ENCODE measurements at regions of chr1 and their contacts with region 1.

Region 1: DNA sequence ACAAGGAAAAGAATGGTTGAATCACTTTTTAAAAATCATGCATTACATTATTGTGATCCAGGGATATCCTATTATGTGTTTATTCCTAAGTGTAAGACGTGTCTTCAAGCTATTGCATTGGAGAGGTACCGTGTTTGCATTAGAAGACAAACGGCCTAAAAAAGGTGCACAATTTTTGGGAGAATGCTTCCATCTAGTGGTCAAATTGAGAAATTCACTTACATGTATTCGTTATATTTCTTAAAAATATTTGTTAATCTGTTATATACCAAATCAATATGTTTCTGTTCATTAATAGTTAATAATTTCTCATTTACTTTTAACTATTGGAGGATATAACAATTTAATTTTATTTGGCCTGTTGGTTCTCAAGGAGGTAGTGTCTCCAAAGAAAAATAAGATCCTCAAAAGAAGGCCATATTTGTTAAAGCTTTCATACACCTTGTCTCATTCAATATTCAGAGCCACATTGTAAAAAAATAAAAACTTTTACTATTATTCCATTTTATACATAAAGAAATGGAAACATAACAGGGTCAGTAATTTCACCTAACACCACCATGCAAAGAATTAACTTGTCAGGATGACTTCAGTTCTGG is 40.5 kb upstream of the KCTD3 start:
- DNase-seq: no peak
- H3K4me3 Mint-ChIP-seq: no peak overlapping the region
- H3K27ac Mint-ChIP-seq: no peak overlapping the region
- H3K4me1 Mint-ChIP-seq: peaks cover 3% of the 10 kb centered on the region
- H3K27me3 Mint-ChIP-seq: peaks cover 13% of the 10 kb centered on the region

Region 2: GRCh38 chr1:214632091-214632490 is 894.6 kb before region 1 on chr1:
- CTCF ChIA-PET with region 1: interaction called, 4 read pairs
- POLR2A ChIA-PET with region 1: no interaction called
- intact Hi-C with region 1: loop called (anchors 1 kb)
- DNase-seq: peak; percentile 23
- H3K4me3 Mint-ChIP-seq: no peak overlapping the region
- H3K27ac Mint-ChIP-seq: no peak overlapping the region
- H3K4me1 Mint-ChIP-seq: peaks cover 20% of the 10 kb centered on the region
- H3K27me3 Mint-ChIP-seq: no peaks in the 10 kb centered on the region

Region 3: DNA sequence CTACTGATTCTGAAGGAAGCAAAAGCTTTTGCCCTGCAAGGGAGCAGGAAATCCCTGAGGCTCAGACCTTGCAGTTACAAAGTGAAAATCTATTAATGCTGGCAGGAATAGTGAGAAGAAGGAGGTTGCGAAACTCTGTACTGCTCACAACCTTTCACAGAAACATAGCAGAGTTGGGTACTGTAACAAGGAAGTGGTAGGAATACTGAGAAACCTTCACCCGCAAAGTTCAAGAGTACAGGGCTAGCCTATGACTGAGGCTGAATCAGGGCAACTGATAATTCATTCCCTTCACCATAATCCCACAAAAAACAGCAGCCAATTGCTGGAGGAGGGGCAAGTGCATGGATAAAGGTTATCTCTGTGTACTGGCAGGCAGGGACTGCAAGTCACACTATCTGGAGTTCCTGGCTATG is 16.5 kb after region 1 on chr1:
- CTCF ChIA-PET with region 1: interaction called, 29 read pairs
- POLR2A ChIA-PET with region 1: no interaction called
- intact Hi-C with region 1: no loop called
- DNase-seq: no peak
- H3K4me3 Mint-ChIP-seq: no peak overlapping the region
- H3K27ac Mint-ChIP-seq: no peak overlapping the region
- H3K4me1 Mint-ChIP-seq: no peaks in the 10 kb centered on the region
- H3K27me3 Mint-ChIP-seq: no peaks in the 10 kb centered on the region

Measured in activated CD4-positive, alpha-beta memory T cell treated with anti-CD3 and anti-CD28 coated beads for 36 hours (primary cell).